PC-3 (cell line): ENCODE measurements at regions of chr17 and their contacts with region 1.

Region 1: DNA sequence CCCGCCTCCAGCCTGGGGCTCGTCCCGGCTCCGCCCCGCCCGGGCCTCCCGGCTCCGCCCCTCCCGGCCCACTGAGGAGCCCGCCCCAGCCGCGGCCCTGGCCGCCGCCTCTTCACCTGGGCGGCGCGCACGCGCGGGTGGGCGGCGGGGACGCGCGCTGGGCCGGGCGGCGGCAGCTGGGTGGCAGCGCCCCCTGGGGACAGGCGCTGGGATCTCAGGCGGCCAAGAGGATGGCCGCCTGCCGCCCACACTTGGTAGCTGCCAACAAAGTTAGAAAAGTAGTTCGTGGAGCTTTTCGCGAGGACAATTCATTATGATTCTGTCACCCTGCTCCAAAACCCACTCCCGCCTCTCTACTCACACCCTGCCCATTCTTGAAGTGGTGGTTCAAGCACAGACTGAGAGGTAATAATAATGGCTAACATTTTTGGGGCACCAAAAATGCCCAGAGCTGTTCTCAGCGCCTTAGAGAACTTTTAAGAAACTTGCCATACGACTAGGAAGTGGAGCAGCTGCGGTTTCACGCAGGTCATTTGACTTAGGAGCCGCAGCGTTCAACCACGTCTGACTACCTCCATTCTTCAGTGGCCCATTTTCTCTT is 340 bp upstream of the MYO1D start:
- DNase-seq: peak; percentile 86
- ATAC-seq: peak; percentile 93
- H3K4me3 ChIP-seq: peak overlapping the region; percentile 82
- H3K27ac ChIP-seq: no peak overlapping the region
- H3K4me1 ChIP-seq: peaks cover 16% of the 10 kb centered on the region
- H3K27me3 ChIP-seq: no peaks in the 10 kb centered on the region
- CTCF ChIP-seq: peak; percentile 57

Region 2: GRCh38 chr17:32732900-32733299 is 144.4 kb before region 1 on chr17:
- CTCF ChIA-PET with region 1: no interaction called
- POLR2A ChIA-PET with region 1: no interaction called
- intact Hi-C with region 1: no loop called
- DNase-seq: no peak
- ATAC-seq: no peak
- H3K4me3 ChIP-seq: no peak overlapping the region
- H3K27ac ChIP-seq: no peak overlapping the region
- H3K4me1 ChIP-seq: no peaks in the 10 kb centered on the region
- H3K27me3 ChIP-seq: no peaks in the 10 kb centered on the region
- CTCF ChIP-seq: no peak

Region 3: GRCh38 chr17:32783602-32784001 is 93.7 kb before region 1 on chr17:
- CTCF ChIA-PET with region 1: interaction called, 31 read pairs
- POLR2A ChIA-PET with region 1: interaction called, 4 read pairs
- intact Hi-C with region 1: loop called (anchors 1 kb)
- DNase-seq: peak; percentile 71
- ATAC-seq: peak; percentile 79
- H3K4me3 ChIP-seq: no peak overlapping the region
- H3K27ac ChIP-seq: no peak overlapping the region
- H3K4me1 ChIP-seq: no peaks in the 10 kb centered on the region
- H3K27me3 ChIP-seq: no peaks in the 10 kb centered on the region
- CTCF ChIP-seq: peak; percentile 80

Region 4: DNA sequence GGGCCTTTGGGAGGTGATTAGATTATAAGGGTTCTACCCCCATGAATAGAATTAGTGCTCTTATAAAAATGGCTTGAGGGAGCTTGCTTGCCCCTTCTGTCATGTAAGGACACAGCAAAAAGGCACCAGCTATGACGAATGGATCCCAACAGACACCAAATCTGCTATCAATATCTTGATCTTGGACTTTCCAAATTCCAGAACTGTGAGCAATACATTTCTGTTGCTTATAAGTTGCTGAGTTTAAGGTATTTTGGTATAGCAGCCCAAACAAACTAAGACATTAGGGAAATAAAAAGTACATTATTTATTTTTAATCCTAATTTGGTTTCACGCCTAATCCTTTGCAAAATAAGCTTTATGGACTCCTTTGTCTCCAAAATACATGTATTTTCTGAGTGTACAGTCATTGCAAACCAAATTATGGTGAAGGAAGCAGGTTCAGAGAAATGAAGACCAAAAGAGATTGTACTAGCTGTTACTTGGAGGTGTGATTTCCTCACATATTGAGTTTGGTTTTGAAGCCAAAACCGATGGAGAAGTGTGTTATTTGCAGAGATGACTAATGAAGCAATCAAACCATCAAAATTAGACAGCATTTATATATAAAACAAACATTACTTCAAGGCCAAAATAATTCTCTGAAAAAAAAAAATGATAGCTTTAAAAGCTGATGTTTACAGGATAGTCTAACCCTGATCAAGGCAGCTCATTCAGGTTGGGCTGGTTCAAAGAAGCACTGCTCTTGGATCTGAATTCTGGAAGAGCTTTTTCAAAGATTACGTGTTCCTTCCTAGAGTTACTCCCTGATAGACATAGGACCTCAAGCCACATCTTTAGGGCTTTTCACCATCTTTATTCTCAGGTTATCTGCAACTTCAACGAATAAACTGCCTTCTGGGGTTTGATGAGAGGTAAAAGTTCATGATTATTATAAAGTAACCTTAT is 72.0 kb before region 1 on chr17:
- CTCF ChIA-PET with region 1: interaction called, 19 read pairs
- POLR2A ChIA-PET with region 1: no interaction called
- intact Hi-C with region 1: loop called (anchors 1 kb)
- DNase-seq: peak; percentile 62
- ATAC-seq: peak; percentile 19
- H3K4me3 ChIP-seq: no peak overlapping the region
- H3K27ac ChIP-seq: peak overlapping the region; percentile 73
- H3K4me1 ChIP-seq: peaks cover 46% of the 10 kb centered on the region
- H3K27me3 ChIP-seq: no peaks in the 10 kb centered on the region
- CTCF ChIP-seq: no peak

Region 5: GRCh38 chr17:32819035-32819434 is 58.2 kb before region 1 on chr17:
- CTCF ChIA-PET with region 1: no interaction called
- POLR2A ChIA-PET with region 1: no interaction called
- intact Hi-C with region 1: loop called (anchors 2 kb)
- DNase-seq: no peak
- ATAC-seq: no peak
- H3K4me3 ChIP-seq: no peak overlapping the region
- H3K27ac ChIP-seq: no peak overlapping the region
- H3K4me1 ChIP-seq: no peaks in the 10 kb centered on the region
- H3K27me3 ChIP-seq: no peaks in the 10 kb centered on the region
- CTCF ChIP-seq: no peak

Region 6: GRCh38 chr17:32828822-32829221 is 48.4 kb before region 1 on chr17:
- CTCF ChIA-PET with region 1: interaction called, 3 read pairs
- POLR2A ChIA-PET with region 1: no interaction called
- intact Hi-C with region 1: loop called (anchors 2 kb)
- DNase-seq: no peak
- ATAC-seq: peak; percentile 11
- H3K4me3 ChIP-seq: peak overlapping the region; percentile 55; the same call in 1 of the 2 replicates
- H3K27ac ChIP-seq: no peak overlapping the region
- H3K4me1 ChIP-seq: peaks cover 12% of the 10 kb centered on the region
- H3K27me3 ChIP-seq: no peaks in the 10 kb centered on the region
- CTCF ChIP-seq: no peak

Region 7: DNA sequence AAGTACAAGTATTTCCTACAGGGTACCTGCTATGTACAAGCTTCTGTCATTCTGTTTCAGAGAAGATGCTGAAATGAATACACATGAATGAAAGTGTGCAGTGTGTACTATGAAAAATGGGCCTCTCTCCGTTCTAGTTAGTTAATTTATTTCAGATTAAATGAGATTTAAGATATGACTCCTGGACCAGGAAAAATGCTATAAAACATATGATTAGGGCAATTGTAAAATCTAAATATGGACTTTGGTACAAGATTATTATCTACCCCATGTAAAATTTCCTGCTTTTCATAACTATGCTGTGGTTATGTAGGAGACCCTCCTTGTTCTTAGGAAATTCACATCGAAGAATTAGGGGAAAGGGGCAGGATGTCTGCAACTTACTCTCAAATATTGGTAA is 29.3 kb before region 1 on chr17:
- CTCF ChIA-PET with region 1: no interaction called
- POLR2A ChIA-PET with region 1: no interaction called
- intact Hi-C with region 1: no loop called
- DNase-seq: no peak
- ATAC-seq: no peak
- H3K4me3 ChIP-seq: no peak overlapping the region
- H3K27ac ChIP-seq: no peak overlapping the region
- H3K4me1 ChIP-seq: peaks cover 1% of the 10 kb centered on the region; the same call in 1 of the 2 replicates
- H3K27me3 ChIP-seq: no peaks in the 10 kb centered on the region
- CTCF ChIP-seq: no peak

Region 8: DNA sequence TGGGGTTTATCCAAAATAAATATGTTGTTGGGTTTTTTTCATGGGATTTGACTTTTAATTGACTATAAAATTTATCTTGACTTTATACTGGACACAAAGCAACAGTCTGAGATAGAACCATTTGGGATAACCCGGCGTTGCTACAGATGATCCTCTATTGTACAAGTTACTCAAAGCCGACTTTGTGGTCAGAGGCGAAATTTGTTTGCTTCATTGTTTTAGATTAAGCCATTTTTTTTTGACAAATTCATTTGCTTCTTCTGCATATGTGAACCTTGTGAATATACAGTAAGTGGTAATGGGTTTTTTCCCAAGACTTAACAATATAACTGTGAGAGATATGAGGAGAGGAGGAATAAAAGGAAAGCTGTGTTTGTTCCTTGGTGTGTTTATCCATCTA is 12.1 kb before region 1 on chr17:
- CTCF ChIA-PET with region 1: no interaction called
- POLR2A ChIA-PET with region 1: no interaction called
- intact Hi-C with region 1: no loop called
- DNase-seq: no peak
- ATAC-seq: no peak
- H3K4me3 ChIP-seq: no peak overlapping the region
- H3K27ac ChIP-seq: no peak overlapping the region
- H3K4me1 ChIP-seq: peaks cover 11% of the 10 kb centered on the region; the same call in 1 of the 2 replicates
- H3K27me3 ChIP-seq: no peaks in the 10 kb centered on the region
- CTCF ChIP-seq: no peak

Region 9: GRCh38 chr17:32909787-32910369 is 32.6 kb after region 1 on chr17:
- CTCF ChIA-PET with region 1: interaction called, 6 read pairs
- POLR2A ChIA-PET with region 1: interaction called, 3 read pairs
- intact Hi-C with region 1: loop called (anchors 1 kb)
- DNase-seq: peak; percentile 74
- ATAC-seq: peak; percentile 54
- H3K4me3 ChIP-seq: no peak overlapping the region
- H3K27ac ChIP-seq: no peak overlapping the region
- H3K4me1 ChIP-seq: peaks cover 12% of the 10 kb centered on the region
- H3K27me3 ChIP-seq: no peaks in the 10 kb centered on the region
- CTCF ChIP-seq: peak; percentile 66

Region 10: GRCh38 chr17:32936894-32937500 is 59.7 kb after region 1 on chr17:
- CTCF ChIA-PET with region 1: no interaction called
- POLR2A ChIA-PET with region 1: no interaction called
- intact Hi-C with region 1: no loop called
- DNase-seq: peak; percentile 70
- ATAC-seq: peak; percentile 68
- H3K4me3 ChIP-seq: no peak overlapping the region
- H3K27ac ChIP-seq: no peak overlapping the region
- H3K4me1 ChIP-seq: peaks cover 15% of the 10 kb centered on the region
- H3K27me3 ChIP-seq: no peaks in the 10 kb centered on the region
- CTCF ChIP-seq: peak; percentile 81